CD4-positive, alpha-beta T cell (primary cell): ENCODE measurements at regions of chr1 and their contacts with region 1.

Region 1: GRCh38 chr1:159780583-159781582 is at the start of gene DUSP23:
- DNase-seq: peak; percentile 90 to 98 (median 96)
- ATAC-seq: peak; percentile 95
- H3K4me3 ChIP-seq: peak within 1 kb of the TSS; percentile 66
- H3K4me3 Mint-ChIP-seq: peak within 1 kb of the TSS; percentile 92
- H3K27ac ChIP-seq: peak within 1 kb of the TSS; percentile 35 to 45
- H3K27ac Mint-ChIP-seq: peak within 1 kb of the TSS; percentile 73
- H3K4me1 ChIP-seq: peaks cover 20% of the 10 kb centered on the region
- H3K4me1 Mint-ChIP-seq: peaks cover 24% of the 10 kb centered on the region
- H3K27me3 ChIP-seq: no peaks in the 10 kb centered on the region
- H3K27me3 Mint-ChIP-seq: no peaks in the 10 kb centered on the region
- CTCF ChIP-seq: peak; percentile 83
- total RNA-seq, gene DUSP23: 3.9 to 6.0 TPM

Region 2: GRCh38 chr1:159798893-159799292 is 18.0 kb after region 1 on chr1:
- CTCF ChIA-PET with region 1: interaction called, 7 read pairs
- POLR2A ChIA-PET with region 1: interaction called, 3 read pairs
- intact Hi-C with region 1: loop called in 1 of 2 experiments (anchors 2 kb)
- DNase-seq: peak; percentile 11 to 77 (median 29)
- ATAC-seq: peak; percentile 59
- H3K4me3 ChIP-seq: no peak overlapping the region
- H3K4me3 Mint-ChIP-seq: no peak overlapping the region
- H3K27ac ChIP-seq: no peak overlapping the region
- H3K27ac Mint-ChIP-seq: no peak overlapping the region
- H3K4me1 ChIP-seq: peaks cover 32% of the 10 kb centered on the region
- H3K4me1 Mint-ChIP-seq: peaks cover 16% of the 10 kb centered on the region
- H3K27me3 ChIP-seq: peaks cover 0 to 3% of the 10 kb centered on the region in 2 experiments
- H3K27me3 Mint-ChIP-seq: peaks cover 3% of the 10 kb centered on the region
- CTCF ChIP-seq: peak; percentile 73

Region 3: GRCh38 chr1:159854693-159855192 is 73.9 kb after region 1 on chr1:
- CTCF ChIA-PET with region 1: interaction called, 3 read pairs
- POLR2A ChIA-PET with region 1: no interaction called
- intact Hi-C with region 1: loop called in 1 of 2 experiments (anchors 2 kb)
- DNase-seq: peak; percentile 55 to 87 (median 75)
- ATAC-seq: peak; percentile 96
- H3K4me3 ChIP-seq: peak overlapping the region; percentile 70
- H3K4me3 Mint-ChIP-seq: peak overlapping the region; percentile 95
- H3K27ac ChIP-seq: peak overlapping the region in 1 of 2 donors; percentile 46
- H3K27ac Mint-ChIP-seq: peak overlapping the region; percentile 88
- H3K4me1 ChIP-seq: peaks cover 12% of the 10 kb centered on the region
- H3K4me1 Mint-ChIP-seq: peaks cover 20% of the 10 kb centered on the region
- H3K27me3 ChIP-seq: no peaks in the 10 kb centered on the region
- H3K27me3 Mint-ChIP-seq: no peaks in the 10 kb centered on the region
- CTCF ChIP-seq: no peak

Region 4: DNA sequence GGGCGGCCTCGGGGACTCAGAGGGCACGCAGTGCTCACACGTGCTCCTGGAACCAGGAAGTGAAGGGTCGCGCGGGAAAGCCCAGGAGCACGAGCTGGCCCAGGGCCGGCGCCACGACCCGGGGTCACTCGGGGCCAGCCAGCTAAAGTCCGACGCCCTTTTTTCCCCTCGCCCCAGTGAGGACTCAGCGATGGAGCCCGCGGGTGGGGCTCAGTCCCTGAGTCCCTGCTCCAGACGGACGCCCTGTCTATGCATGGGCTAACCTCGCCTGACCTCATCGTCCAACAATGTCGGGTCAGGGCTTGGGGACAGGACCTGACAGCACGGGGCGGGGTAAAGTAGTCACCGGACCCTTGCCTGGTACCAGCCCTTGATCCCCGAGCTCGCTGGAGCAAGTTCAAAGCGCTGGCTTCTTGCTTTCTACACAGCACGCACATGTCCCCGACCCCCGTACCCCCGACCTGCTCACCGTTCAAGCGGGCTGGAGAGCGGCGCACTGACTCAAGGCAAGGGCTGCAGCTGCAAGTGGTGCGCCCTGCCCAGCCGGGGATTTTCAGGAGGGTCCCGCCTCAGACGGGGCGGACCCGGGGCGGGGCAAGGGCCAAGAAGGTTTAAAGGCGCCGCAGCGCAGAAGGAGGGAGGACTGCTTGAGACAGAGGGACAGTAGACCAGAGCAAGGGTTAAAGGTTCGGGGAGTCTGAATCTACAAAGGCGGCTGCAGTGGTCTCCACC is 144.3 kb after region 1 on chr1 and contains the start of gene TAGLN2:
- CTCF ChIA-PET with region 1: interaction called, 7 read pairs
- POLR2A ChIA-PET with region 1: interaction called, 13 read pairs
- intact Hi-C with region 1: loop called in 1 of 2 experiments (anchors 5 kb)
- DNase-seq: peak; percentile 76 to 95 (median 88)
- ATAC-seq: peak; percentile 52
- H3K4me3 ChIP-seq: peak within 1 kb of the TSS; percentile 98
- H3K4me3 Mint-ChIP-seq: peak within 1 kb of the TSS; percentile 94
- H3K27ac ChIP-seq: peak within 1 kb of the TSS; percentile 99 to 100
- H3K27ac Mint-ChIP-seq: peak within 1 kb of the TSS; percentile 94
- H3K4me1 ChIP-seq: peaks cover 52% of the 10 kb centered on the region
- H3K4me1 Mint-ChIP-seq: peaks cover 44% of the 10 kb centered on the region
- H3K27me3 ChIP-seq: no peaks in the 10 kb centered on the region
- H3K27me3 Mint-ChIP-seq: no peaks in the 10 kb centered on the region
- CTCF ChIP-seq: no peak
- total RNA-seq, gene TAGLN2: 301 to 311 TPM

Region 5: GRCh38 chr1:159945483-159946241 is 164.8 kb after region 1 on chr1 and contains the start of gene IGSF9:
- CTCF ChIA-PET with region 1: interaction called, 6 read pairs
- POLR2A ChIA-PET with region 1: no interaction called
- intact Hi-C with region 1: loop called in 1 of 2 experiments (anchors 5 kb)
- DNase-seq: peak; percentile 53 to 89 (median 72)
- ATAC-seq: peak; percentile 97
- H3K4me3 ChIP-seq: peak within 1 kb of the TSS; percentile 46
- H3K4me3 Mint-ChIP-seq: peak within 1 kb of the TSS; percentile 62
- H3K27ac ChIP-seq: no peak within 1 kb of the TSS
- H3K27ac Mint-ChIP-seq: no peak within 1 kb of the TSS
- H3K4me1 ChIP-seq: peaks cover 15% of the 10 kb centered on the region
- H3K4me1 Mint-ChIP-seq: peaks cover 10% of the 10 kb centered on the region
- H3K27me3 ChIP-seq: peaks cover 22 to 26% of the 10 kb centered on the region in 2 experiments
- H3K27me3 Mint-ChIP-seq: peaks cover 42% of the 10 kb centered on the region
- CTCF ChIP-seq: peak; percentile 63
- total RNA-seq, gene IGSF9: not detected

Region 6: GRCh38 chr1:160031365-160032164 is 250.7 kb after region 1 on chr1 and contains the start of gene PIGM:
- CTCF ChIA-PET with region 1: interaction called, 9 read pairs
- POLR2A ChIA-PET with region 1: interaction called, 7 read pairs
- intact Hi-C with region 1: loop called (anchors 1 kb)
- DNase-seq: peak; percentile 82 to 98 (median 92)
- ATAC-seq: peak; percentile 98
- H3K4me3 ChIP-seq: peak within 1 kb of the TSS; percentile 89
- H3K4me3 Mint-ChIP-seq: peak within 1 kb of the TSS; percentile 98
- H3K27ac ChIP-seq: peak within 1 kb of the TSS; percentile 52 to 67
- H3K27ac Mint-ChIP-seq: peak within 1 kb of the TSS; percentile 94
- H3K4me1 ChIP-seq: peaks cover 24% of the 10 kb centered on the region
- H3K4me1 Mint-ChIP-seq: peaks cover 50% of the 10 kb centered on the region
- H3K27me3 ChIP-seq: no peaks in the 10 kb centered on the region
- H3K27me3 Mint-ChIP-seq: no peaks in the 10 kb centered on the region
- CTCF ChIP-seq: no peak
- total RNA-seq, gene PIGM: 2.1 to 2.2 TPM

Region 7: DNA sequence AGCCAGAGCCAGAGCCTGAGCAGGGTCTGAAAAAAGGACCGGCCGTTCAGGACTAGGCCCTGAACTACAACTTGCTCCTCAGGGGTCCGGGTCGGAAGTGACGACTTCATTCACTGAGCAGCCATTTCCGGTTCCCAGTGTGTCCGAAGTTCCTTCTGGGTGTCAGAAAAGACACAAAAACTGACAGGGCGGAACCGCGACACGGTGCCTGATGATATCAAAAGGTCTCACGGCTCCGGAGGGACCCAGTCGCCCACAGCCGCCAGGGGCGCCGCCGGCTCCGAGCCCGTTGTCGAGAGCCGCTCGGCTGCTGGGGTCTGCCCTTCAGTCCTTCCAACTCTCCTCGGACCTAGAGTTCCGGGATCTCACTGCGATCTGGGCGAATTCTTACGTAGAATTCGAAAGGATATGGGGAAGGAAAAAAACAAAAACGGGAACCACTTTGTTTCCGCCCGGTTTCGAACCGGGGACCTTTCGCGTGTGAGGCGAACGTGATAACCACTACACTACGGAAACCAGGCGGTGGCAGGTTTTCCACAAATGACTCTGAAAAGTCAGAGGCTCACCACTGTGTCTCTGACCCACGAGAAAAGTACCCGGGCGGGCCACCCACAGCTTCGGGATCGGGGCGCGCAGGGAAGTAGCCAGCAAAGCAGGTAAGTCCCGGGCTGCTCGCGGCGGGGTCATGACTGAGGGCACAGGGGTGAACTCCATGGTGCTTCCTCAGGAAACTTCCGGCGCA is 1618.5 kb after region 1 on chr1:
- CTCF ChIA-PET with region 1: no interaction called
- POLR2A ChIA-PET with region 1: no interaction called
- intact Hi-C with region 1: loop called in 1 of 2 experiments (anchors 10 kb)
- DNase-seq: peak; percentile 88 to 97 (median 93)
- ATAC-seq: peak; percentile 85
- H3K4me3 ChIP-seq: peak overlapping the region; percentile 87
- H3K4me3 Mint-ChIP-seq: peak overlapping the region; percentile 97
- H3K27ac ChIP-seq: peak overlapping the region; percentile 95 to 98
- H3K27ac Mint-ChIP-seq: peak overlapping the region; percentile 99
- H3K4me1 ChIP-seq: peaks cover 25% of the 10 kb centered on the region
- H3K4me1 Mint-ChIP-seq: peaks cover 23% of the 10 kb centered on the region
- H3K27me3 ChIP-seq: no peaks in the 10 kb centered on the region
- H3K27me3 Mint-ChIP-seq: peaks cover 29% of the 10 kb centered on the region
- CTCF ChIP-seq: peak; percentile 79